ENCODE measurements at regions of chr20 and their contacts with region 1.

Region 1: GRCh38 chr20:36439040-36439730 is 102.1 kb upstream of the MYL9 start:
- DNase-seq: peak; percentile 88
- H3K27ac ChIP-seq: no peak overlapping the region
- CTCF ChIP-seq: peak; percentile 99

Region 2: GRCh38 chr20:36206068-36206467 is 233.1 kb before region 1 on chr20:
- CTCF ChIA-PET with region 1: interaction called, 46 read pairs
- POLR2A ChIA-PET with region 1: interaction called, 3 read pairs
- DNase-seq: no peak
- H3K27ac ChIP-seq: no peak overlapping the region
- CTCF ChIP-seq: no peak

Region 3: DNA sequence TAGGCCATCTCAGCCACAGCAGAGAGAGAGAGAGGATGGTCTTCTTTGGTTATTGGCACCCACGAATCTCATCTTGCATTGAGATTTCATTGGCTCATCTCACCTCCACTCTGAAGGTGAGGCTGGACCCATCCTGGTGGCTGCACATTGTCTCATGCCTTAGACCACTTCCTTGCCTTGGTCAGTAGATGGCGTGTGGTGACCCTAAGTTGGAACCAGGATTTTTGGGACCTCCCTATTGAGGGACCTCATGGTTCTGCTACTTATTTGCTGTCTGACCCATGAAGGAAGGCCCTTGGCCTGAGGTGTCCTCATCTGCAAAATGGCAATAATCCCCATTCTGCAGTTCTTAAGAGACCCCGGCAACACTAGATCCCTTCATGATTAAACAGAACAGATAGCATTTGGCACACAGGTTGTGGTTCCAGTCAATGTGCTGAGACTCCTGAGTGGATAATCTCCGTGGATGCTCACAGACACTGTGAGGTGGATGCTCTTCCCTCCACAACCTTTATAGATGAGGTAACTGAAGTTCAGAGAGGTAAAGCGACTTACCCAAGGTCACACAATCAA is 224.4 kb before region 1 on chr20:
- CTCF ChIA-PET with region 1: interaction called, 30 read pairs
- POLR2A ChIA-PET with region 1: interaction called, 3 read pairs
- DNase-seq: peak; percentile 73
- H3K27ac ChIP-seq: no peak overlapping the region
- CTCF ChIP-seq: peak; percentile 81

Region 4: GRCh38 chr20:36235892-36236785 is 203.0 kb before region 1 on chr20 and contains the start of gene AAR2:
- CTCF ChIA-PET with region 1: interaction called, 15 read pairs
- POLR2A ChIA-PET with region 1: no interaction called
- DNase-seq: peak; percentile 89
- H3K27ac ChIP-seq: peak within 1 kb of the TSS; percentile 75
- CTCF ChIP-seq: no peak

Region 5: DNA sequence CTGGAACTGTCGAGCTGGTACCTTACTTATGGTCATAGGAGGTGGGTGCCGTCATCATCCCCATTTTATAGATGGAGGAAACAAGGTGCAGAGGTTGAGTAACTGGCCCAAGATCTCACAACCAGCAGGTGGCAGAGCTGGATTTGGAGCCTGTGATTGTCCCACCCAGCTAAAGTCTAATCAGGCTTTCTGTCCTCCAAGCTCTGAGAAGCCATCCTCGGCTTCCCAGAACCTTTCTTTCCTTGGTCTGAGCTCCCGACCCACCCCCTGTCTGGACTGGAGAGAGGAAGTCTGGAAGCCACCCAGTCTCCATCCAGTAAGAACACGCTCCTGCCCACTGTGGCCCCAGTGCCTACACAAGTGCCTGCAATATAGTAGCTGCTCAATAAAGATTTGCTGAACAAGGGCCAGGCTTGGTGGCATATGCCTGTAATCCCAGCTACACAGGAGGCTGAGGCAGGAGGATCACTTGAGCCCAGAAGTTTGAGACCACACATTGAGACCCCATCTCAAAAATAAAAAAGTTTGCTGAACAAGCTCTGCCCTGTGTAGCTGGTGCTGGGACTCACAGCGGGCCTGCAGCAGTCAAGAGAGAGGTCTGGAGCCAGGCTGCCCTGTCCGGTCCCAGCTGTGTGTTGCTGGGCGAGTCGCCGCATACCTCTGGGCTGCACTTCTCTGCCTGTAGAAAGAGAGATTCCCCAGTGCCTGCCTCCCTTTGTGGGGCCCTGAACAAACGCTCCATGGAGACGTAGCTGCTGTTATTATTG is 165.6 kb before region 1 on chr20:
- CTCF ChIA-PET with region 1: interaction called, 100 read pairs
- POLR2A ChIA-PET with region 1: no interaction called
- DNase-seq: peak; percentile 41
- H3K27ac ChIP-seq: no peak overlapping the region
- CTCF ChIP-seq: peak; percentile 35; the same call in 1 of the 2 replicates

Region 6: DNA sequence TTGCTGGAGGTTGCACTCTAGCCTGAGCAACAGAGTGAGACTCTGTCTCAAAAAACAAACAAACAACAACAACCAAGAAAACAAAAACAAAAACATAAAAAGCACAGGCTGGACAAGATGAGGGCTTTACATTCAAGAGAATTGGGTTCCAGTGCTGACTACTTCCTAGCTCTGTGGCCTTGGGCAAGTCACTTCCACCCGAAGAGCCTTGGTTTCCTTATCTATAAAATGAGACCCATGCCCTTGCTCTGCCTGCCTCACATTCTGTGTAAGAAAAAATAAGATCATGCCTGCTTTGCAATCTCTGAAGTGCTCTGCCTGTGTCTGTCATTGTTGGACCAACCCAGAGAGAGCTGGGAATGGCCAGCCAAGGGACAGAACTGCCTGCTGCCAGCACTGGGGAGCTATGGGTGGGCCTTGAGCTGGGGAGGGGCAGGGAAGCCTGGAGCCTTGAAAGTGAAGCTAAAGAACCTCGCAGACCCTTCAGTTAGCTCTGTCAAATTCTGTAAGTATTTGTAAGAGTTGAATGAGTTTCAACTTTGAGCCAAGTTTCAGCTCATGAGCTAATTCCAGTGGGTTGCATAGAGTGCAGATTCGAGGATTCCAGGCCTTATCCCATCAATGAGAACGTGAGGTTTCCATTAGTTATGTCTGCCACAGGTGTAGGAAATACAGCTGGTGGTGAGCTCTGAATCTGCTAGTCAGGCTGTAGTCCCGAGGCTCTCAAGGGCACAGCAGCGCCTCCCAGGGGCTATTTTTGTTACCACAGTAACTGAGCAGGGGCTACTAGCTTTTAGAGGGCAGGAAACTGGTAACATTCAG is 39.8 kb before region 1 on chr20:
- CTCF ChIA-PET with region 1: interaction called, 14 read pairs
- POLR2A ChIA-PET with region 1: no interaction called
- DNase-seq: peak; percentile 63
- H3K27ac ChIP-seq: no peak overlapping the region
- CTCF ChIP-seq: no peak; the same call in 1 of the 2 replicates

Region 7: GRCh38 chr20:36585463-36586108 is 146.4 kb after region 1 on chr20:
- CTCF ChIA-PET with region 1: no interaction called
- POLR2A ChIA-PET with region 1: no interaction called
- DNase-seq: peak; percentile 99
- H3K27ac ChIP-seq: peak overlapping the region; percentile 82
- CTCF ChIP-seq: no peak

Region 8: GRCh38 chr20:36645998-36646397 is 206.8 kb after region 1 on chr20 and contains the start of gene SLA2:
- CTCF ChIA-PET with region 1: no interaction called
- POLR2A ChIA-PET with region 1: no interaction called
- DNase-seq: no peak
- H3K27ac ChIP-seq: no peak within 1 kb of the TSS
- CTCF ChIP-seq: no peak